B cell (primary cell): ENCODE measurements at regions of chr12 and their contacts with region 1.

Region 1: GRCh38 chr12:17763366-17763765 is 326.6 kb downstream of the RERGL start:
- DNase-seq: no peak
- ATAC-seq: no peak
- H3K4me3 ChIP-seq: no peak overlapping the region
- H3K4me3 Mint-ChIP-seq: no peak overlapping the region
- H3K27ac ChIP-seq: no peak overlapping the region
- H3K27ac Mint-ChIP-seq: no peak overlapping the region
- H3K4me1 ChIP-seq: no peaks in the 10 kb centered on the region
- H3K4me1 Mint-ChIP-seq: no peaks in the 10 kb centered on the region
- H3K27me3 ChIP-seq: no peaks in the 10 kb centered on the region
- H3K27me3 Mint-ChIP-seq: no peaks in the 10 kb centered on the region
- CTCF ChIP-seq: no peak

Region 2: DNA sequence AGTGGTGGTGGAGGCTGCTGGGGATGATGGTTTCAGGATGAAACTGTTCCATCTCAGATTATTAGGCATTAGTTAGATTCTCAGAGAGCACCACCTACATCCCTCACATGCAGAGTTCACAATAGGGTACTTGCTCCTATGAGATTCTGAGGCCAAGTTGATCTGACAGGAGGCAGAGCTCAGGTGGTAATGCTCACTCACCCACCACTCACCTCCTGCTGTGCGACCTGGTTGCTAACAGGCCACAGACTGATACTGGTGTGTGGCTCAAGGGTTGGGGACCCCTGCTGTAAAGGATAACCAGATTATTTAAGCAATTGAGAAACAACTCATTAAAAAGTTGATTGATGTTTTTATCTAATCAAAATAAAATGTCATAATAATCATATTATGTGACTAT is 78.1 kb after region 1 on chr12:
- CTCF ChIA-PET with region 1: no interaction called
- POLR2A ChIA-PET with region 1: no interaction called
- intact Hi-C with region 1: loop called (anchors 5 kb)
- DNase-seq: no peak
- ATAC-seq: no peak
- H3K4me3 ChIP-seq: no peak overlapping the region
- H3K4me3 Mint-ChIP-seq: no peak overlapping the region
- H3K27ac ChIP-seq: no peak overlapping the region
- H3K27ac Mint-ChIP-seq: no peak overlapping the region
- H3K4me1 ChIP-seq: no peaks in the 10 kb centered on the region
- H3K4me1 Mint-ChIP-seq: no peaks in the 10 kb centered on the region
- H3K27me3 ChIP-seq: no peaks in the 10 kb centered on the region
- H3K27me3 Mint-ChIP-seq: no peaks in the 10 kb centered on the region
- CTCF ChIP-seq: no peak

Region 3: DNA sequence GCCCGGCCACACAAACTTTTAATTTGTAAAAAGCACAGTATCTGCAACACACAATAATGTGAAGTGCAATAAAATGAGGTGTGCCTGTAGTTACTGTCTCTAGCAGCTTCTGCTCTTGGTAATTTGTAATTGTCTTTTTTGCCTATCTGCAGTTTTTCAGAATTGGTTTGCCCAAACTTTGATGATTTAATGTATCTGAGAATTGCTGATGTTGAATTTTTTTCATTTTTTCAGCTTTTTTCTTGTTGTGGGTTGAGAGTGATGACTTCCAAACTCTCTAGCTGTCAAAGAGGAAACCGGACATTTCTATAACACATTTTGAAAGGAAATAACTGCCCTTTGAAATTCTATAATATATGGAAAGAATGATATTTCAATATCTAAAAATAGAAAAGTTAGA is 89.7 kb after region 1 on chr12:
- CTCF ChIA-PET with region 1: no interaction called
- POLR2A ChIA-PET with region 1: no interaction called
- intact Hi-C with region 1: loop called (anchors 2 kb)
- DNase-seq: no peak
- ATAC-seq: no peak
- H3K4me3 ChIP-seq: no peak overlapping the region
- H3K4me3 Mint-ChIP-seq: no peak overlapping the region
- H3K27ac ChIP-seq: no peak overlapping the region
- H3K27ac Mint-ChIP-seq: no peak overlapping the region
- H3K4me1 ChIP-seq: no peaks in the 10 kb centered on the region
- H3K4me1 Mint-ChIP-seq: no peaks in the 10 kb centered on the region
- H3K27me3 ChIP-seq: no peaks in the 10 kb centered on the region
- H3K27me3 Mint-ChIP-seq: no peaks in the 10 kb centered on the region
- CTCF ChIP-seq: no peak